AG04450 (cell line): ENCODE measurements at regions of chr6 and their contacts with region 1.

Region 1: GRCh38 chr6:110389689-110390382 is 25.5 kb downstream of the DDO start:
- DNase-seq: no peak
- H3K4me3 ChIP-seq: no peak overlapping the region
- H3K27ac ChIP-seq: no peak overlapping the region
- H3K27me3 ChIP-seq: peaks cover 9% of the 10 kb centered on the region
- CTCF ChIP-seq: no peak

Region 2: GRCh38 chr6:109705258-109705657 is 684.6 kb before region 1 on chr6:
- CTCF ChIA-PET with region 1: interaction called, 22 read pairs
- POLR2A ChIA-PET with region 1: no interaction called
- DNase-seq: peak; percentile 74
- H3K4me3 ChIP-seq: no peak overlapping the region
- H3K27ac ChIP-seq: no peak overlapping the region
- H3K27me3 ChIP-seq: no peaks in the 10 kb centered on the region
- CTCF ChIP-seq: peak; percentile 100

Region 3: GRCh38 chr6:110053395-110054240 is 336.2 kb before region 1 on chr6:
- CTCF ChIA-PET with region 1: interaction called, 34 read pairs
- POLR2A ChIA-PET with region 1: no interaction called
- DNase-seq: peak; percentile 24
- H3K4me3 ChIP-seq: no peak overlapping the region
- H3K27ac ChIP-seq: no peak overlapping the region
- H3K27me3 ChIP-seq: peaks cover 15% of the 10 kb centered on the region
- CTCF ChIP-seq: peak; percentile 82

Region 4: DNA sequence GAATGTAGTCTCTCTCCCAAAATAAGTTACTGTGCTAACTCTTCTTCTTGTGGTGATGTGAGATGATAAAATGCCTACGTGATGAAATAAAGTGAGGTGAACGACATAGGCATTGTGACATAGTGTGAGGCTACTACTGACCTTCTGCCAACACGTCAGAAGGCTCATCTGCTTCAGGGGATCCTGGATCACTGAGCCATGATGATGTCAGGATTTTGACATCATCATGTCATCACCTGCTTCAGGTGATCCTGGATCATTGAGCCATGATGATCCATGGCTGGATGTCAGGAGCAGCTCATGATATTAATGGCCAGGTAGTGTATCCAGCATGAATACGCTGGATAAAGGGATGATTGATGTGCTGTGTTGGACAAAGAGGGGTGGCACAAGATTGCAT is 312.8 kb before region 1 on chr6:
- CTCF ChIA-PET with region 1: interaction called, 12 read pairs
- POLR2A ChIA-PET with region 1: no interaction called
- DNase-seq: no peak
- H3K4me3 ChIP-seq: no peak overlapping the region
- H3K27ac ChIP-seq: no peak overlapping the region
- H3K27me3 ChIP-seq: no peaks in the 10 kb centered on the region
- CTCF ChIP-seq: no peak

Region 5: DNA sequence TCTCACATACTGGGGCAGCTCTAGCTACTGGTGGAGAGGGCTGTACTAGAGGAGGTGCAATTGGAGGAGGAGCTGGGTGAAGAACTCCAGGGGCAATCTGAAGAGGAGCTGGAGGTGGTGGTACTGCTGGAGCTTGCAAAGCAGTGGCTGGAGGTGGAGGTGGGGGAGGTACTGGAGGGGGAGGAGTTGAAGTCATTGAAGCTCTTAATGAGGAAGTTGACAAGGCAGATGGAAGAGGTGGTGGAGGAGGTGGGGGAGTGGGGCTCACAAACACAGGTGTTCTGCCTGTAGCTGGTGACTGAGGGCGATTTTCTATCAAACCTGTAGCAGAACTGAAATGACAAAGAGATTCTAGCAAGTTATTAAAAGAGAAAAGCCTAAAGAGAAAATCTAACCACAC is 288.0 kb before region 1 on chr6:
- CTCF ChIA-PET with region 1: interaction called, 21 read pairs
- POLR2A ChIA-PET with region 1: no interaction called
- DNase-seq: no peak
- H3K4me3 ChIP-seq: no peak overlapping the region
- H3K27ac ChIP-seq: no peak overlapping the region
- H3K27me3 ChIP-seq: no peaks in the 10 kb centered on the region
- CTCF ChIP-seq: no peak

Region 6: GRCh38 chr6:110179401-110180227 is 210.2 kb before region 1 on chr6 and contains the start of gene WASF1:
- CTCF ChIA-PET with region 1: interaction called, 24 read pairs
- POLR2A ChIA-PET with region 1: no interaction called
- DNase-seq: peak; percentile 97
- H3K4me3 ChIP-seq: peak within 1 kb of the TSS; percentile 87
- H3K27ac ChIP-seq: peak within 1 kb of the TSS; percentile 86
- H3K27me3 ChIP-seq: no peaks in the 10 kb centered on the region
- CTCF ChIP-seq: no peak
- polyA plus RNA-seq, gene WASF1: 15.7 and 22.3 TPM in 2 replicates

Region 7: GRCh38 chr6:110285306-110286060 is 104.4 kb before region 1 on chr6:
- CTCF ChIA-PET with region 1: interaction called, 11 read pairs
- POLR2A ChIA-PET with region 1: no interaction called
- DNase-seq: no peak
- H3K4me3 ChIP-seq: no peak overlapping the region
- H3K27ac ChIP-seq: no peak overlapping the region
- H3K27me3 ChIP-seq: no peaks in the 10 kb centered on the region
- CTCF ChIP-seq: no peak

Region 8: DNA sequence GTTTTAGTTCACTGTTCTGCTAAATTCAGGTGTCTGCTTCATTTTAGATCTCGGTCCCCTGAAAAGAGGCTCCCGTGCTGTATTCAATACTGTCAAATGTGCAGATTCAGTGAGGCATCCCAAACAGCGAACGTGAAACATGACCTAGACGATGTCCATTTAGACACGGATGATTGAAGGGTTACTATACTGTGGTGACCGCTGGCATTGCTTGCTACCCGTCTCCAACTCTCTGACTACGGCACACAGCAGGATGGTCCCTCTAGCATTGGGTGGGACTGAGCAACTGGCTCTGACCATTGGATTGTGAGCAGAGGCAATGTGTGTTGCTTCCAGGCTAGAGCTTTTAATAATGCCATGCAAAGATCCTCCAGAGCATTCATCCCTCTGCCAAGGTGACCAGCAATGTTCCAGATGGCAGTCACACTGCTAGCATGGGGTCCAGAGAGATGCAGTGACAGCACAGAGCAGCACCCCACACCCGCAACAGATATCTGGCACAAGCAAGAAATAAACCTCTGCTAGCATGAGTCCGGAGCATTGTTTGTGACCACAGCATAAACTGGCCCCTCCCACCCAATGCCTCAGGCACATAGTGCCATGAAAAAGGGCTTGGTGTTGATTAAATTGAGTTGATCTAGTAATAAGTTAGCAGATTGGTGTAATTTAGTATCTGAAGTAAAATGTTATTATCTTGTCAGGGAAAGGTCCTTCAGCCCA is 40.7 kb before region 1 on chr6:
- CTCF ChIA-PET with region 1: no interaction called
- POLR2A ChIA-PET with region 1: no interaction called
- DNase-seq: no peak
- H3K4me3 ChIP-seq: no peak overlapping the region
- H3K27ac ChIP-seq: no peak overlapping the region
- H3K27me3 ChIP-seq: no peaks in the 10 kb centered on the region
- CTCF ChIP-seq: no peak